ENCODE measurements at regions of chr1 and their contacts with region 1.

Region 1: GRCh38 chr1:117895482-117896114 is 33.8 kb downstream of the GDAP2 start:
- DNase-seq: peak; percentile 80
- H3K4me3 Mint-ChIP-seq: no peak overlapping the region
- H3K27ac Mint-ChIP-seq: no peak overlapping the region
- H3K4me1 Mint-ChIP-seq: no peaks in the 10 kb centered on the region
- H3K27me3 Mint-ChIP-seq: no peaks in the 10 kb centered on the region

Region 2: DNA sequence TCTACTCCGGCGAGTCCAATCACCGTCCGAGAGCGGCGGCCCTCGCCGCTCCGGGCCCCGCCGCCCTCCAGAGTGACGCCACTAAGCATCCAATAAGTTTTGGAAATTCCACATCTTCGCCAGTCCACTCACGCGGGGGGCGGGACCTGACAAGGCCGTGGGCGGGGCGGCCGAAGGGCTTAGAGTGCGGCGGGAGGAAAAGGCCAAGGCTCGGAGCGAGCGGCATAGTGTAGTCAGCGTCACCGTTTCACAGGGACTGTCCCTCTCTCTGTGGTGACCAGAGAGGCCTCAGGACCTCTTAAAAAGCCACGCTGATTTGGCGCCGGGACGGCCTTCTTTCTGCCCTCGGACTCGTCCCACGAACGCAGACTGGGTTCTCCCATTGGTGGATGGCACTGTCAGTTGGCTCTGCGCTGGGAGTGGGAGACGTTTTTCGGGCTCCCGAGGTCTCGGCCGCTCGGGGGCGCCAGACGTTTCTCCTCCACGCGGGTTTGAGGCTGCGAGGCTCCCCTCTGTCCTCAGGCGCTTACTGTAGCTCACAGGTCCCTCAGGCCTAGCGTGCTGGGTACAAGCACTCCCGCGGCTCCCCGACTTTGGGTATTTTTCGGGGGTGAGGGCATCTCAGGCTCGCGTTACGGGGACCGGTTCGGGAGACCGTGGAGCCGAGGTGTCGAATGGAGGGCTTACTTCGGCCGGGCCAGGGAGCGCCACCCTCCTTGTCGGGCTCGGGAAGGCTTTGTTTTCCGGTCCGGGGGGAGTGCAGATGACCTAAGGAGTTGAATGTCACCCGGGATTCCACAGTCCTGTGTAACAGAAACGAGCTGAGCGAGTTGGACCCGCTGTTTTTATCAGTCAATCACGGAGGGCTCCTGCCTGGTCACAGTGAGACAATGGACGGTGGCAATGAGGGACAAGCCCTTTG is 773.6 kb before region 1 on chr1:
- CTCF ChIA-PET with region 1: no interaction called
- intact Hi-C with region 1: loop called (anchors 10 kb)
- DNase-seq: peak; percentile 90
- H3K4me3 Mint-ChIP-seq: peak overlapping the region; percentile 73
- H3K27ac Mint-ChIP-seq: no peak overlapping the region
- H3K4me1 Mint-ChIP-seq: no peaks in the 10 kb centered on the region
- H3K27me3 Mint-ChIP-seq: peaks cover 12% of the 10 kb centered on the region

Region 3: DNA sequence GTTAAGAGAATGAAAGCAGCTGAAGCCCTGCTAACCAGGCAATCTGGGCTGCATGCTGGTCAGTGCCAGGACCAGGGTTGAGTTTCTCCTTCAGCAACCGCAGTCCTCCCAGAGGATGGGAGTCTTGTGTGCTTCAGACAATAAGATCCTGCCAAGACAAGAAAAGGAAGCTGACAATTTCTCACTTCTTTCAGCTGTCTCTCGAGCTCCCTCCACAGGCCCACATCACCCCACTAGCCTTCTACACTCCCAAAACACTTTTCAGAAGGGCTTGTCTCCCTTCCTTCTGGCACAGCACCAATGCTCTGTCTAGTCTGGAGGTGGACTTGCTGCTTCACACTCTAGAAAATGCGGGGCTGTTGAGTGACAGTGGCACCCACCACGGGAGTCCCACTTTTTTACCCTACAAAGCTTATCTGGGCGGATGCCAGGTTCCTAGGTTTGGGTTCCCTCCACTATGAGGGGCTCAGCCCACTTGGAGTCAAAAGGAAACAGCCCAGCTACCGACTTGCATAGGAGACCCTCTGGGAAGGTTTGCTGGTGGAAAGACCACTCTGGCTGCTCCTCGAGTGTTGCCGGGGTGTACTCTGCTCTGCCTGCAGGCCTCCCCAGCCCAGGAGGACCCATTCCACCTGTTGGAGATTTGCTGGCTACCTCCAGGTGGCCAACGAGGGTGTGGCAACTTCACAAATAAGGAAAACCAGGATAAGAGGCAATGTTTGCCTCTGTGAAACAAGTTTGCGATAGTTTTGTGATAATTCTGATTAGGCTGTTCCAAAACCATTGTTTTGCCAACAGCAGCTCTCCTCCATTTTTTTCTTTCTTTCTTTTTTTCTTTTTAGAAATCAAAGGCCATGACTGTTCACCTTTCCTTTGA is 220.8 kb before region 1 on chr1:
- CTCF ChIA-PET with region 1: no interaction called
- intact Hi-C with region 1: loop called (anchors 2 kb)
- DNase-seq: peak; percentile 73
- H3K4me3 Mint-ChIP-seq: no peak overlapping the region
- H3K27ac Mint-ChIP-seq: peak overlapping the region; percentile 46
- H3K4me1 Mint-ChIP-seq: peaks cover 4% of the 10 kb centered on the region
- H3K27me3 Mint-ChIP-seq: peaks cover 11% of the 10 kb centered on the region

Region 4: GRCh38 chr1:118485757-118486156 is 590.2 kb after region 1 on chr1:
- CTCF ChIA-PET with region 1: no interaction called
- intact Hi-C with region 1: no loop called
- DNase-seq: no peak
- H3K4me3 Mint-ChIP-seq: no peak overlapping the region
- H3K27ac Mint-ChIP-seq: no peak overlapping the region
- H3K4me1 Mint-ChIP-seq: no peaks in the 10 kb centered on the region
- H3K27me3 Mint-ChIP-seq: no peaks in the 10 kb centered on the region

Measured in activated naive CD4-positive, alpha-beta T cell treated with anti-CD3 and anti-CD28 coated beads for 36 hours (primary cell).